MCF 10A (cell line): ENCODE measurements at regions of chr12 and their contacts with region 1.

Region 1: DNA sequence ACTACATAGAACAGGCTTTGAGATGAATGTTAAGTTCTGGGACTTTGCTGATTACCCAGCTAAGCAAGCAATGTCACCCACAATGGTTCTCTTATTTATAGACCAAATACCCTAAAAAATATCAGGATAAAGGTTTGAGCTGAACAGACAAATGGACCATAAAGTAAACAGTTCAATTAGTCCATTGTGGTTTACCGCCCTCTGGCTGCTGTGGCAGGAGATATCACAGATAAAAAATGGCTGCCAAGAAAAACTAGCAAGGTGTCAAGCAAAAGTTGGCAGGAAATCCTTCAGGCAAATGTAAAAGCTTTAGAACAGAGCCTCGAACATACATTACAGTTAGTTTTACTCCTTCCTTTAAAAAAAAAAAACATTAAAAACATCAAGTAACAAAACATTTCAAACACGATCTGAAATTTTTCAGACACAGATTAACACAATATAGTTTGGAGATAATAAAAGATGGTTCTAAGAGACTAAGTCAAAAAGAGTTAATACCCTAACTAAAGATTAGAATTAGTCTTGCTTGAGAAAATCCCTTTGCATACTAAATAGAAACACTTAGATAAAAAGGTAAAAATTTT is 41.3 kb downstream of the MED13L start:
- DNase-seq: peak; percentile 74
- H3K4me3 Mint-ChIP-seq: no peak overlapping the region
- H3K27ac Mint-ChIP-seq: no peak overlapping the region
- H3K4me1 Mint-ChIP-seq: peaks cover 7% of the 10 kb centered on the region
- H3K27me3 Mint-ChIP-seq: no peaks in the 10 kb centered on the region
- CTCF ChIP-seq: peak; percentile 72

Region 2: DNA sequence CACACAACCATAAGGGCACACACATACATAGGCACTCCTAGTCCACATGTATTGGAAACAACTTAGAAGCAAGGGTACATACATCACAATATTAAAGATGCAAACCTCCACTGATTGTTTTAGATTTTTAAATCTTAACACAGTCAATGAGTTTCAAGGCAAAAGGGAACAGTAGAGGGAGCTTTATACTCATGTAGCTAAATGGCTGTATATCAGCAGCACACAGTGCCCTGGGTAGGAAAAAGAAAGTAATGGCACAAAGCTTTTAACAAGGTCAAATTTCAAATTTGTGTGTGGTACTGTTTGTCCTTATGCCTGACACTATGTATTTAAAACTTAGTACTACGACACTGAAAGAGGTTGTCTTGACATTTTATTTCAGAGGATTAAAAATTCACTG is 220.7 kb before region 1 on chr12:
- CTCF ChIA-PET with region 1: interaction called, 14 read pairs
- POLR2A ChIA-PET with region 1: interaction called, 3 read pairs
- intact Hi-C with region 1: loop called (anchors 1 kb)
- DNase-seq: peak; percentile 43
- H3K4me3 Mint-ChIP-seq: no peak overlapping the region
- H3K27ac Mint-ChIP-seq: no peak overlapping the region
- H3K4me1 Mint-ChIP-seq: peaks cover 4% of the 10 kb centered on the region
- H3K27me3 Mint-ChIP-seq: no peaks in the 10 kb centered on the region
- CTCF ChIP-seq: peak; percentile 30

Region 3: DNA sequence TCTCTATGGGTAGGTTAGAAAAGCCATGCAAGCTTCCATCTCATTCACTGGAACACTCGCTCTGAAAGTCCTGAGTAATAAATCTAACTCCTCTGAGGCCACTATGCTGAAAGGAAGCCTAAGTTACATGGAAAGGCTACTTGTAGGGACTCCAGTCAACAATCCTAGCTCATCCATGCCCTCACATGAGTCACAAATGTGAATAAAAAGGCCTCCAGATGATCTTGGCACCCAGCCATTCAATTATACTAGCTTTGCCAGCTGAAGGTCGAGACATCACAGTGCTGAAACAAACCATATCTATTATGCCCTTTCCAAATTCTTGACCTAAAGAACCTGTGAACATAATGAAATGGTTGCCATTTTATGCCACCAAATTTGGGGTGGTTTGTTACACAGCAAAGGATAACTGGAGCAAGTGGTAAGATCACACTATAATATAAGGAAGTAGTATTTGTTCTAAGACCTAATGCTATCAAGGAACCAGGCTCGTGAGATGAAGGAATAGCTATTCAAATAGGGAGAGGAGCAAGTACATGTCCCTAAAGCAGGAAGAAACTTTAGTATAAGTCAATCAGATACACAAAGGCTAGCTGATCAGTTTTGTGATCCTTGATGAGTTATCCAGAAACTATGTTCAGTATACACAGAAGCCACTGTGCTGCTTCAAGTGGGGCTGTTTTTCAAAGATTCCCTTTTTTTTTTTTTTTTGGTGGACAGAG is 100.9 kb before region 1 on chr12:
- CTCF ChIA-PET with region 1: interaction called, 14 read pairs
- POLR2A ChIA-PET with region 1: interaction called, 5 read pairs
- intact Hi-C with region 1: no loop called
- DNase-seq: peak; percentile 93
- H3K4me3 Mint-ChIP-seq: no peak overlapping the region
- H3K27ac Mint-ChIP-seq: no peak overlapping the region
- H3K4me1 Mint-ChIP-seq: peaks cover 48% of the 10 kb centered on the region
- H3K27me3 Mint-ChIP-seq: no peaks in the 10 kb centered on the region
- CTCF ChIP-seq: no peak

Region 4: DNA sequence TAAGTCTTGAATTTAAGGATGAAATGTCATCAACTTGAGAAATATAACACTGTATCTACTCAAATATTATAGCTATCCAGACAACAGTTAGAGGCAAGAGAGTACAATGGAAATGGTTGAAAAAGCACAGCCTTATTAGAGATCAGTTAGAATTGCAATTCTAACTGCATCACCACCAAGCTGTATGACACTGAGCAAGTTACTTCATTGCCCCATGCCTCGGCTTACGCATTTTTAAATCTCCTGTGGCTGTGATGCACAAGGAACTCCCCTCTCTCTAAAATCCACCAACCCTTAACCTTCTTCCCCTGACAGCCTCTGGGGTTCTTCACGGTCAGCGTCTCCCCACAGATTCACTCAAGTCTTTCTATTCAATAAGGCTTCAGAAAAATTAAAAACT is 33.8 kb before region 1 on chr12:
- CTCF ChIA-PET with region 1: interaction called, 10 read pairs
- POLR2A ChIA-PET with region 1: no interaction called
- intact Hi-C with region 1: no loop called
- DNase-seq: no peak
- H3K4me3 Mint-ChIP-seq: no peak overlapping the region
- H3K27ac Mint-ChIP-seq: no peak overlapping the region
- H3K4me1 Mint-ChIP-seq: peaks cover 11% of the 10 kb centered on the region
- H3K27me3 Mint-ChIP-seq: no peaks in the 10 kb centered on the region
- CTCF ChIP-seq: no peak

Region 5: DNA sequence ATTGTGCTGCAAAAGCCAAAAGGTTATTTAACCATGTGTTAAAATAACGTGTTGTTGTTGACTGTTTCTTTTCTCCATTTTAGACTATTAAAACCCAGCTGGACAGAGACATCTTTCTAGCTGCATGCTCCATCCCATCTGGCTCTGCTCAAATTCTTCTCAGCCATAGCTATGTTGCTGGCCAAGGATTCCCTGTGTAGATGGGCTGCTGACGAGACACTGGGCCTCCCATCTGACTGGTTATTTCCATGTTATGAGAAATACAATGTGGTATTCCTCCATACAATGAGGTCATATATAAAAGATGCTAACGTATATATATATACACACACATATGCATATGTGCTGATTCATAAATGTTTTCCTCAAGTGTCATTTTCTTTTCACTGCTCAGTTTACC is 11.1 kb after region 1 on chr12:
- CTCF ChIA-PET with region 1: interaction called, 24 read pairs
- POLR2A ChIA-PET with region 1: interaction called, 4 read pairs
- intact Hi-C with region 1: no loop called
- DNase-seq: no peak
- H3K4me3 Mint-ChIP-seq: no peak overlapping the region
- H3K27ac Mint-ChIP-seq: no peak overlapping the region
- H3K4me1 Mint-ChIP-seq: peaks cover 20% of the 10 kb centered on the region
- H3K27me3 Mint-ChIP-seq: no peaks in the 10 kb centered on the region
- CTCF ChIP-seq: no peak